ENCODE measurements at regions of chr10 and their contacts with region 1.

Region 1: DNA sequence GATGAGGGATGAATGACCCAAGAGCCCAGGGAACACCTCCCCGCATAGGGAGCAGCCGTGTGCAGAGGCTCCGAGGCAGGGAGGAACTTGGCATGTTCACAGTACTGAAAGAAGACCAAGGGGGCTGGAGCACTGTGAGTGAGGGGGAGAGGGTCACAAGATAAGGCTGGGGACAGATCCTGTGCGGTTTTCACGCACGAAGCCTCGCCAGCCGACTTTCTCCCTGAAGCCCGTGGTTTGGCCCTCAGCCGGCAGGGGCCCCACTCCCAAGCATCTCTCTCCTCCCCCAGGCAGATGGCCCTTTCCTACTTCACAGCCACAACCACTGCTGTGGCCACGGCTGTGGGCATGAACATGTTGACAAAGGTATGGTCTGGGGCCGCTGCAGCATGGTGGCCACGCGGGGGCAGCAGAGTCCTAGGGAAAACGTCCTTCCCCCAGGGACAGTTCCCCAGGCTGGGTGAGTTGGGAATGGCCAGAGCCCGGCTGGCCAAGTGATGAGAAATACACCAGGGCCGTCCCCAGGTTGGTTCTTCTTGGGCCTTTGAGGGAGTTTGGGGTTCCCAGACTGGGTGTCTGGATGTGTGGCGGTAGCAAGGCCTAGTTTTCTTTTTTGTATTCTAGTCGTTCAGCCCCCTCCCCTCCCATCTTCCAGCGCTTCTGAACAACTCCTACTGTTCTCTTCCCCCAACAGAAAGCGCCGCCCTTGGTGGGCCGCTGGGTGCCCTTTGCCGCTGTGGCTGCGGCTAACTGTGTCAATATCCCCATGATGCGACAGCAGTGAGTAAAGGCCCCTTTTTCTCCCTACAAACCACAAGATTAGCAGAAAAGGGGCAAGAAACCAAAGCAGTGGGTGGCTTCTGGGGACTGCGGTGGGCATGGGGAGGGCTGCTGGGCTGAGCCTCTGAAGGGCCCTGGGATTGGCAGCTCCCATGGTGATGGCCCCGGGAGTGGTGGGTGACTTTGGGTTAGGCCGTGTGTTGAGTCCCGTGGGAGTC is 14.4 kb upstream of the WBP1L start:
- DNase-seq: peak; percentile 80
- ATAC-seq: peak; percentile 71
- H3K4me3 Mint-ChIP-seq: no peak overlapping the region
- H3K27ac Mint-ChIP-seq: no peak overlapping the region
- H3K4me1 Mint-ChIP-seq: no peaks in the 10 kb centered on the region
- H3K27me3 Mint-ChIP-seq: no peaks in the 10 kb centered on the region

Region 2: DNA sequence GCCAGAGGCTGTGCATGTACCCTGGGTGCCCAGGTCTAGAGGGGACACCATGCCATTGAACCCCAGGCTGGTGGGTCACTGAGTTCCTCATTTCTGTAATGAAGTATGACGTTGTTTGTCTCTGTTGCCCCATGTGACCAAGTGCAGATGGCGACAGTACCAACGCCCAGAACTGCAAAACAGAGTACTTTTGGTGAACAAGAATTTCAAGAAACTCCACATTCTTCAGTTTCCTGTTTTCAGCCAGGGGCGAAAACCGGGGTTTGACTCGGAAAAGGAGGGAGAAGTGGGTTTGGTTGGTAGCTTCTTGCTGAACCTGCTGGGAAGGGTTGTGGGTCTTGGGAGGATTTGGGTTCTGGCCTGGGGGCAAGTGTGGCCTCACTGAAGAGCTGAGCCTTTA is 89.7 kb after region 1 on chr10:
- CTCF ChIA-PET with region 1: no interaction called
- POLR2A ChIA-PET with region 1: no interaction called
- intact Hi-C with region 1: no loop called
- DNase-seq: no peak
- ATAC-seq: no peak
- H3K4me3 Mint-ChIP-seq: no peak overlapping the region
- H3K27ac Mint-ChIP-seq: no peak overlapping the region
- H3K4me1 Mint-ChIP-seq: no peaks in the 10 kb centered on the region
- H3K27me3 Mint-ChIP-seq: no peaks in the 10 kb centered on the region

Region 3: DNA sequence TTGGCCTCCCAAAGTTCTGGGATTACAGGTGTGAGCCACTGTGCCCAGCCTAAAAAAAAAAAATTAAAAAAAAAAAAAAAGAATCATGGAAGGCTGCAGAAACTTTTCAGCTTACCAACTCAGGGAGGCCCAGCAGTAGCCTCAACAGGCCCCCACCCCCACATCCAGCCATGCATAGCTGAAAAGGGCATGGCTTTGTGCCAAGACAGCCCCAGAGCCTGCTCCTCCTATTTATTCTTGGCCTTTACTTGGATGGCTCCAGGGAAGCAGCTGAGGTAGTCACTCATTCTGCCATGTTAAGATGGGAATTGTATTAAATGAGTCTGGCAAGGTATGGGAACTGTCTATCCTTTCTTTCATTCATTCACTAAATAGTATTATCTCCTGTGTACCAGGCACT is 175.0 kb after region 1 on chr10:
- CTCF ChIA-PET with region 1: interaction called, 3 read pairs
- POLR2A ChIA-PET with region 1: no interaction called
- intact Hi-C with region 1: loop called (anchors 1 to 5 kb)
- DNase-seq: no peak
- ATAC-seq: no peak
- H3K4me3 Mint-ChIP-seq: no peak overlapping the region
- H3K27ac Mint-ChIP-seq: no peak overlapping the region
- H3K4me1 Mint-ChIP-seq: no peaks in the 10 kb centered on the region
- H3K27me3 Mint-ChIP-seq: no peaks in the 10 kb centered on the region